ENCODE measurements at regions of chrX and their contacts with region 1.

Region 1: GRCh38 chrX:30570505-30570904 is 7.1 kb downstream of the TASL start:
- DNase-seq: no peak
- ATAC-seq: no peak
- H3K4me3 ChIP-seq: no peak overlapping the region
- H3K27ac ChIP-seq: no peak overlapping the region
- H3K4me1 ChIP-seq: no peaks in the 10 kb centered on the region
- H3K27me3 ChIP-seq: no peaks in the 10 kb centered on the region

Region 2: DNA sequence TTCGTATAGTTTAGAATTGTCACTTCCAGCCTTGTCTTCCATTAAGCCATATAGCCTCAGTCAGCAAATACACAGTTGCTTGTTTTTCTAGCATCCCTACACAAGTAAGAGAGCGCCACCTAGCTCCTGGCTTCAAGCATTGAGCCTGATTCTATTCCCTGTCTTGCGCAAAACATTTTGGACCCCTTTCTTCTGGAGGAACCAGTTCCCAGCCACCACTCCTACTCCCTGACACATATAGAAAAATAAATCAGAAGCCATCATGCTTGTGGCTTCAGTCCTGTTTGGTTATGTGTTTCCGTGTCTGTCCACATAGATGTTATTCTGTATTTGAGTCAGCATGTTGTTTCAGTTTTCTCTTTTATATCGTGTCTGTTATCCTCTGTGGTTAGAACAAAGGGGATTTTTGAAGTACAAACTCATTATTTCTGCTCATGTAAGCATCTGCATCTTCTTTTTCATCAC is 142.6 kb after region 1 on chrX:
- intact Hi-C with region 1: loop called (anchors 5 kb)
- DNase-seq: peak in 1 of 2 donors; percentile 58
- ATAC-seq: peak; percentile 60
- H3K4me3 ChIP-seq: no peak overlapping the region
- H3K27ac ChIP-seq: no peak overlapping the region
- H3K4me1 ChIP-seq: no peaks in the 10 kb centered on the region
- H3K27me3 ChIP-seq: no peaks in the 10 kb centered on the region

Region 3: GRCh38 chrX:30920263-30920662 is 349.8 kb after region 1 on chrX:
- intact Hi-C with region 1: no loop called
- DNase-seq: no peak
- ATAC-seq: no peak
- H3K4me3 ChIP-seq: no peak overlapping the region
- H3K27ac ChIP-seq: no peak overlapping the region
- H3K4me1 ChIP-seq: no peaks in the 10 kb centered on the region
- H3K27me3 ChIP-seq: no peaks in the 10 kb centered on the region